Common myeloid progenitor, CD34-positive (primary cell): ENCODE measurements at regions of chr19 and their contacts with region 1.

Region 1: GRCh38 chr19:18846862-18847548 is 15.2 kb downstream of the UPF1 start:
- DNase-seq: peak; percentile 64 to 82 (median 76)
- H3K4me3 ChIP-seq: no peak overlapping the region
- H3K27ac ChIP-seq: no peak overlapping the region
- H3K4me1 ChIP-seq: peaks cover 0 to 29% (median 20%) of the 10 kb centered on the region in 4 experiments
- H3K27me3 ChIP-seq: no peaks in the 10 kb centered on the region

Region 2: GRCh38 chr19:18833849-18834643 is 13.0 kb before region 1 on chr19:
- CTCF ChIA-PET with region 1: interaction called, 41 read pairs
- POLR2A ChIA-PET with region 1: no interaction called
- DNase-seq: no peak
- H3K4me3 ChIP-seq: peak overlapping the region in 6 of 7 experiments; percentile 62 to 90 (median 76)
- H3K27ac ChIP-seq: peak overlapping the region in 1 of 2 experiments; percentile 83
- H3K4me1 ChIP-seq: peaks cover 13 to 35% (median 24%) of the 10 kb centered on the region in 4 experiments
- H3K27me3 ChIP-seq: no peaks in the 10 kb centered on the region

Region 3: DNA sequence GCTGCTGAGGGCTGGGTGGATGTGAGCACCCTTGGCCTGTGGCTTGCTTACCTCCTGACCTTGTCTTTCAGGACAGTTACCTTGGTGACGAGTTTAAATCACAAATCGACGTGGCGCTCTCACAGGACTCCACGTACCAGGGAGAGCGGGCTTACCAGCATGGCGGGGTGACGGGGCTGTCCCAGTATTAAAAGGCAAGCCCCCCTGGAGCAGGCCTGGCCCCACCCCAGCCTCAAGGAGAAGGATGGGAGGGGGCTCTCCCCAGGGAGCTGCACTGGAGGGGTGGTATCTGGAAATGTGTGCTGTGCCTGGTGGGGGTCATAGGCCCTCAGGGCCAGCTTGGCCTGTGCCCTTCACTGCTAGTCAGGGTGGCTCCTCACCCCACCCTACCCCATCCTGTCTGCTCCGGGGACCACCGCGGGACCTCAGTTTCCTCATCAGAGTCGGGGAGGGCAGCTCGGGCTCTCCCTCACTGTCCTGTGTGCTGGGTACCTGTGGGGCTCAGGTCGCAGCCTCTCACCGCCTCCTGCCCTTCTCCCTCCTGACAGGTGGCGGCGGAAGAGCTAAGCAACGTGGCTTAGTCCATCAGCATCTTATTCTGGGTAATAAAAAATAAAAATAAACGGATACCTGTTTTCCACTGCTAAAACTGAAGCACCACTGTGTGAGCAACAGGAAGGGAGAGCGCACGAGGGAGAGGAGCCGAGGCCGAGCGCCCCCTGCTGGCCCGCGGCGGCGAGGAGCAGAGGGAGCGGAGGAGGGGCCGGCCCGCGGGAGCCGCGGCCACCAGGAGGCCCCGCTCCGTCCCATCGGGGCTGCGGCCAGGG is 19.2 kb after region 1 on chr19:
- CTCF ChIA-PET with region 1: interaction called, 17 read pairs
- POLR2A ChIA-PET with region 1: no interaction called
- DNase-seq: peak; percentile 36 to 61 (median 54)
- H3K4me3 ChIP-seq: no peak overlapping the region
- H3K27ac ChIP-seq: no peak overlapping the region
- H3K4me1 ChIP-seq: peaks cover 0 to 19% (median 6%) of the 10 kb centered on the region in 4 experiments
- H3K27me3 ChIP-seq: peaks cover 0 to 31% (median 2%) of the 10 kb centered on the region in 5 experiments